ENCODE measurements at regions of chr5 and their contacts with region 1.

Region 1: GRCh38 chr5:156824800-156825199 is 25.3 kb upstream of the PPP1R2B start:
- DNase-seq: no peak
- ATAC-seq: no peak
- H3K4me3 ChIP-seq: no peak overlapping the region
- H3K27ac ChIP-seq: no peak overlapping the region
- H3K4me1 ChIP-seq: no peaks in the 10 kb centered on the region
- H3K27me3 ChIP-seq: no peaks in the 10 kb centered on the region

Region 2: DNA sequence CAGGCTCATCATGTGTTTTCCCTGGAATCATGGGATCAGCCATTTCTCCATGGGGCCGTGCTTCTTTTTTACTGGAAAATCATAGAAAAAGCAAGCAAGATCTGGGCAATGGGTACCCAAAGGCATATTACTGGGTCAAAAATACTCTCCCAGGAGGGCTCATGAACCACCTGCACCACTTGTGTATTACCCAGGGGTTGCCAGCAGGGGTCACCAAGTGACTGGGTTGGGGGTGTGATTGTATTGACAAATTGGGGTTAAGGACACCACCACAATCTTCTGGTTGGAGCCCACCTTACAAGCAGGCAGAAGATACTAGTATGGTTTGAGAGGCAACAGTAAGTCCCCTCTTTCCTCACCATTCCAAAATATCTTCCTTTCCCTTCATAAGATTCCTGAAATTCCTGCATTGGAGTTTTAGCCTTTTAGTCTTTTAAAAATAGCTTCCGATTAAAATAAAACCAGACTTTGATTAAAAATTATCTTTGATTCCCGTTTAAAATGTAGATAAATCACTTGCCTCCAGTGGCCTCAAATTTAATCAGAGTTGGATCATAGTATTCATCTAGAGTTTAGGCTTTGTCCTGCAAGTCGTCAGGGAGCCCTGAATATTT is 1207.9 kb before region 1 on chr5:
- intact Hi-C with region 1: loop called (anchors 10 kb)
- DNase-seq: no peak
- ATAC-seq: no peak
- H3K4me3 ChIP-seq: no peak overlapping the region
- H3K27ac ChIP-seq: no peak overlapping the region
- H3K4me1 ChIP-seq: no peaks in the 10 kb centered on the region
- H3K27me3 ChIP-seq: no peaks in the 10 kb centered on the region

Region 3: GRCh38 chr5:157026789-157027424 is 202.1 kb after region 1 on chr5:
- intact Hi-C with region 1: no loop called
- DNase-seq: no peak
- ATAC-seq: no peak
- H3K4me3 ChIP-seq: no peak overlapping the region
- H3K27ac ChIP-seq: no peak overlapping the region
- H3K4me1 ChIP-seq: no peaks in the 10 kb centered on the region
- H3K27me3 ChIP-seq: no peaks in the 10 kb centered on the region

Measured in aorta (tissue), 5 donors.